ENCODE measurements at regions of chr11 and their contacts with region 1.

Region 1: GRCh38 chr11:33329705-33330329 is 72.6 kb downstream of the HIPK3 start:
- DNase-seq: no peak
- H3K4me3 ChIP-seq: no peak overlapping the region
- H3K27ac ChIP-seq: no peak overlapping the region
- H3K4me1 ChIP-seq: peaks cover 0 to 52% (median 4%) of the 10 kb centered on the region in 4 donors
- H3K27me3 ChIP-seq: no peaks in the 10 kb centered on the region
- CTCF ChIP-seq: peak; percentile 48 to 61

Region 2: DNA sequence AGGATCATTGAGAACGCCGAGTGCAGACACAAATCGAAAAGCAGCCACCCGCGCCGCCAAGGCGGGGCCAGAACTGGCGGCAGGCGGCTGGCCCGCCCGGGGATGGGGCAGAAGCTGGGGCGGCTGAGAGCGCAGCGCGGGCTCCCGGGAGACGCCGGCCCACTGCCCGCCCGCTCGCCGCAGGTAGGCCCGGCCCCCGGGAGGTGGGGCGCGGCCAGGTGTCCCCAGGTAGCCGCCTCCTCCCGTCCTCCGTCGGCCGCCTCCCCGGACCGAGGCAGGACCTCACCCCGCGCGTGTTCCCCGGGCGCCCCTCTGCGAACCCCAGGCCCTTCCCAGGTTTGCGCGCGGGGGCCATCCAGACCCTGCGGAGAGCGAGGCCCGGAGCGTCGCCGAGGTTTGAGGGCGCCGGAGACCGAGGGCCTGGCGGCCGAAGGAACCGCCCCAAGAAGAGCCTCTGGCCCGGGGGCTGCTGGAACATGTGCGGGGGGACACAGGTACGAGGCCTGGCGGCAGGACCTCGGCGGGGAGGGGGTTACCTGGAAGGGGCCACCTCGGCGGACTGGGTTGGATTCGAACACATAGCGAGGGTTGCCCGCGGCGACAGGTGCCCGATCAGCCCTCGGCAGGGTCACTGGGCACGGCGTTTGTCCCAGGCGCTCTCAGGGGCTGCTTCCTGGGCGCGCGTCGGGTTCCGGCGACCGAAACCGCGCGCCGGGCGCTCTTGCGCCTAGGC is 500.0 kb before region 1 on chr11 and contains the start of gene PRRG4:
- intact Hi-C with region 1: no loop called
- DNase-seq: peak; percentile 47 to 74
- H3K4me3 ChIP-seq: peak within 1 kb of the TSS; percentile 48 to 53
- H3K27ac ChIP-seq: peak within 1 kb of the TSS in 1 of 2 donors; percentile 27
- H3K4me1 ChIP-seq: peaks cover 0 to 11% (median 9%) of the 10 kb centered on the region in 4 donors
- H3K27me3 ChIP-seq: peaks cover 0 to 13% of the 10 kb centered on the region in 2 donors
- CTCF ChIP-seq: no peak

Region 3: GRCh38 chr11:33168709-33169200 is 161.1 kb before region 1 on chr11:
- intact Hi-C with region 1: loop called (anchors 5 kb)
- DNase-seq: no peak
- H3K4me3 ChIP-seq: no peak overlapping the region
- H3K27ac ChIP-seq: no peak overlapping the region
- H3K4me1 ChIP-seq: no peaks in the 10 kb centered on the region
- H3K27me3 ChIP-seq: no peaks in the 10 kb centered on the region
- CTCF ChIP-seq: no peak

Measured in tibial artery (tissue), 4 donors.